B cell (primary cell): ENCODE measurements at regions of chr1 and their contacts with region 1.

Region 1: GRCh38 chr1:19582302-19582701 is 61.8 kb upstream of the NBL1 start:
- DNase-seq: peak; percentile 80
- ATAC-seq: peak; percentile 87
- H3K4me3 ChIP-seq: no peak overlapping the region
- H3K4me3 Mint-ChIP-seq: no peak overlapping the region
- H3K27ac ChIP-seq: no peak overlapping the region
- H3K27ac Mint-ChIP-seq: no peak overlapping the region
- H3K4me1 ChIP-seq: peaks cover 4 to 8% of the 10 kb centered on the region in 2 donors
- H3K4me1 Mint-ChIP-seq: peaks cover 8% of the 10 kb centered on the region
- H3K27me3 ChIP-seq: no peaks in the 10 kb centered on the region
- H3K27me3 Mint-ChIP-seq: peaks cover 7% of the 10 kb centered on the region
- CTCF ChIP-seq: peak; percentile 72

Region 2: GRCh38 chr1:19341201-19342072 is 240.9 kb before region 1 on chr1:
- CTCF ChIA-PET with region 1: interaction called, 50 read pairs
- POLR2A ChIA-PET with region 1: no interaction called
- intact Hi-C with region 1: loop called (anchors 1 kb)
- DNase-seq: peak; percentile 77
- ATAC-seq: peak; percentile 81
- H3K4me3 ChIP-seq: no peak overlapping the region
- H3K4me3 Mint-ChIP-seq: no peak overlapping the region
- H3K27ac ChIP-seq: no peak overlapping the region
- H3K27ac Mint-ChIP-seq: no peak overlapping the region
- H3K4me1 ChIP-seq: no peaks in the 10 kb centered on the region
- H3K4me1 Mint-ChIP-seq: peaks cover 1% of the 10 kb centered on the region
- H3K27me3 ChIP-seq: no peaks in the 10 kb centered on the region
- H3K27me3 Mint-ChIP-seq: no peaks in the 10 kb centered on the region
- CTCF ChIP-seq: peak; percentile 97

Region 3: DNA sequence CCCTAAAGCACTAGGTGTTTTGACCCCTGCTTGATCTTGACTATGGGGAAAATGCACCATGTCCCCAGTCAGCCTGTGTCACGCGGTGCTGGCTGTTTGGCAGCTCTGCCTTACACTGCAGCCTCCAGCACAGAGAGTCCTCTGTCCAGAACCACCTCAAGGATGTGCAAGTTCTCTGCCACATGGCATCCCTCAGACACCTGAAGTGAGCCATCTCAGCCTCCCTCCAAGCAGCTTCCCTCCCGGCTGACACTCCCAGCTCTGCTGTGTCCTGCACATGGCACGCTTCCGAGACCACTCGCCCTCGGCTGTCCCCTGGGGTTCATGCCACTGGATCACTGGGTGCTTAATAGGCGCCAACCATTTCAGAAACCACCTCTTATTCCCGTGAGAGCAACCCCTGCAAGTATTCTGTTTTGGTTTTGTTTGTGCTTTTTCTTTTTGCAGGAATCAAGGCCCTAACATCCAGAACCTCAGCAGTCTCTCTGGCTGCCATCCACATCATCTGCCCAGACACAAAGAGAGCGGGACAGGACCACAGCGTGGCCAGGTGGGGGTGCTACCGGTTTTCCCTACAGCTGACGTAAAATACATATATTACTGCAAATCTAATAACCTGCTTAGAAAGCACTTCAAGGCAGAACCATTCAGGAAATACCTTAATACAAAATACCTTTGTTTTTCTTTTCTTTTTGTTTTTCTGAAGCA is 142.7 kb before region 1 on chr1:
- CTCF ChIA-PET with region 1: interaction called, 68 read pairs
- POLR2A ChIA-PET with region 1: no interaction called
- intact Hi-C with region 1: loop called (anchors 1 kb)
- DNase-seq: peak; percentile 51
- ATAC-seq: peak; percentile 21
- H3K4me3 ChIP-seq: no peak overlapping the region
- H3K4me3 Mint-ChIP-seq: no peak overlapping the region
- H3K27ac ChIP-seq: no peak overlapping the region
- H3K27ac Mint-ChIP-seq: peak overlapping the region; percentile 59
- H3K4me1 ChIP-seq: peaks cover 17 to 40% of the 10 kb centered on the region in 2 donors
- H3K4me1 Mint-ChIP-seq: peaks cover 73% of the 10 kb centered on the region
- H3K27me3 ChIP-seq: no peaks in the 10 kb centered on the region
- H3K27me3 Mint-ChIP-seq: no peaks in the 10 kb centered on the region
- CTCF ChIP-seq: peak; percentile 52

Region 4: GRCh38 chr1:19477284-19478249 is 104.7 kb before region 1 on chr1:
- CTCF ChIA-PET with region 1: interaction called, 17 read pairs
- POLR2A ChIA-PET with region 1: no interaction called
- intact Hi-C with region 1: no loop called
- DNase-seq: peak; percentile 79
- ATAC-seq: peak; percentile 73
- H3K4me3 ChIP-seq: peak overlapping the region; percentile 11 to 57 (median 53)
- H3K4me3 Mint-ChIP-seq: peak overlapping the region; percentile 75
- H3K27ac ChIP-seq: peak overlapping the region; percentile 78 to 95
- H3K27ac Mint-ChIP-seq: peak overlapping the region; percentile 94
- H3K4me1 ChIP-seq: peaks cover 77 to 93% of the 10 kb centered on the region in 2 donors
- H3K4me1 Mint-ChIP-seq: peaks cover 89% of the 10 kb centered on the region
- H3K27me3 ChIP-seq: no peaks in the 10 kb centered on the region
- H3K27me3 Mint-ChIP-seq: no peaks in the 10 kb centered on the region
- CTCF ChIP-seq: no peak

Region 5: DNA sequence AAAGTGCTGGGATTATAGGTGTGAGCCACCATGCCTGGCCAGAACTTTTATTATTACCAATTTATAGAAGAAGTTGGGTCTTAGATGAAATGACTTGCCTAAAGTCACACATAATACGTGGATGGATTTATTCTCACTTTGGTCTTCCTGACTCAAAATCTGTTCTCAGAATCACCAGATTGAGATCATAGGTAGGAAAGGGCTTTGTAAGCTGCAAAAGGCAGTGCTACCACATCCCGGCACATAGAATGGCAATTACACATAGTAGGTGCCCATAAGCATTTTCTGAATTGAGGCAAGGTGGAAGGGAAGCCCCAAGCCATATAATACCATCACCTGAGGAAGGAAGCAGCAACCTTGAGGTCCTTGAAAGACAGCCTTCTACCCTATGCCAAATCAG is 88.8 kb before region 1 on chr1:
- CTCF ChIA-PET with region 1: interaction called, 51 read pairs
- POLR2A ChIA-PET with region 1: no interaction called
- intact Hi-C with region 1: no loop called
- DNase-seq: no peak
- ATAC-seq: no peak
- H3K4me3 ChIP-seq: no peak overlapping the region
- H3K4me3 Mint-ChIP-seq: no peak overlapping the region
- H3K27ac ChIP-seq: no peak overlapping the region
- H3K27ac Mint-ChIP-seq: no peak overlapping the region
- H3K4me1 ChIP-seq: no peaks in the 10 kb centered on the region
- H3K4me1 Mint-ChIP-seq: peaks cover 5% of the 10 kb centered on the region
- H3K27me3 ChIP-seq: no peaks in the 10 kb centered on the region
- H3K27me3 Mint-ChIP-seq: peaks cover 4% of the 10 kb centered on the region
- CTCF ChIP-seq: no peak

Region 6: DNA sequence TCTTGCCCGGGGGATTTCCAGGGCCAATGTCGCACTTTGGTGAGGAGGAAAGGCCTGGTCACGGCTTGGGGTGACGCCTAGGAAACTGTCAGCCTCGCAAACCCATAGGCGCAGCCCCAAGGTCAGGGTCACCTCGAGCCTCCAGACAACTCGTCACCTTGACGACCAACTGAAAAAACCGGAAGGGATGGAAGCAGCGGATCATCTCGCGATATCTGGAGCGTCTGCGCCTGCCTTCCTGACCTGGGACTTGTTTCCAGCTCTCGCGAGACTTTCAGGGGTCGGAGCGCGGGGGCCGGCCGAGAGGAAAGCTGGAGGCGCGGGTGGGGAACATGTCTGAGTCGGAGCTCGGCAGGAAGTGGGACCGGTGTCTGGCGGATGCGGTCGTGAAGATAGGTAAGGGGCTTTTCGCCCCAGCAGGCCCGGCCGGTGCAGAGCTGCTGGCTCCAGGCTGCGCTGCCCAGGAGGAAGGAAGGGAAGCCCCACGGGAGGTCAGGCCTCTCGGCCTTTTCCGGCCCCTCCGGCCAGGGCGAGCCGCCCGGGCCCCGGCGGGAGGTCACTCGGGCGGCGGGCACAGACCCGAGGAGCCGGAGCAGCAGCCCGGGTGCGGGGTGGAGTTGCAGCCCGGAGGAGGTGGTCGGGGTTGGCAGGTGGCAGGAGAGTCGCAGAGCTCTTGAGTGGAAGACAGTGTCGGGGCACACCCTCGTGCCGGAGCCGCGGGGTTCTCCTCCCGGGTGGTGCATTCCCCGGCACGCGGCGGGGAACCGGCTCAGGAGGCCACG is 14.6 kb after region 1 on chr1:
- CTCF ChIA-PET with region 1: interaction called, 20 read pairs
- POLR2A ChIA-PET with region 1: no interaction called
- intact Hi-C with region 1: no loop called
- DNase-seq: peak; percentile 99
- ATAC-seq: peak; percentile 92
- H3K4me3 ChIP-seq: peak overlapping the region; percentile 58 to 97 (median 80)
- H3K4me3 Mint-ChIP-seq: peak overlapping the region; percentile 98
- H3K27ac ChIP-seq: peak overlapping the region; percentile 93 to 100
- H3K27ac Mint-ChIP-seq: peak overlapping the region; percentile 99
- H3K4me1 ChIP-seq: peaks cover 22 to 30% of the 10 kb centered on the region in 2 donors
- H3K4me1 Mint-ChIP-seq: peaks cover 42% of the 10 kb centered on the region
- H3K27me3 ChIP-seq: no peaks in the 10 kb centered on the region
- H3K27me3 Mint-ChIP-seq: no peaks in the 10 kb centered on the region
- CTCF ChIP-seq: no peak